Transverse colon (tissue), 4 donors: ENCODE measurements at regions of chr9 and their contacts with region 1.

Region 1: DNA sequence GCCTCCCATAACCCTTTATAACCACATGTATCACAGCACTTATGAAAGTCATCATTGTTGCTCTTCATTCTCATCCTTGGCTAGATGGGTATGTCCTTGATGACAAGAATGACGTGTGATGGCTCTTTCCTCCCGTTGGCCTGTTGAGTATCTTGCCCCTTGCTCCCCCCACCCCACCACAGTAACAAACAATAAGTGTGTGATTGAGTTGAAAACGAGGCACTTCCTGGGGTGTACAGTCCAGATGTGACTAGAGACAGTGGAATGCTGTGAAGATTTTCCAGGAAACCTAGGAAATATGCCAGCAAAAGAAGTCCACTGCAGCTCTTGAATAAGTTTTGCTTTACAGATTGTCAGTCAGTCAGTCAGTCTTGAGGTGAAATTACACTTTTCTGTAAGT is 262.5 kb downstream of the ELAVL2 start:
- DNase-seq: no peak
- H3K4me3 ChIP-seq: no peak overlapping the region
- H3K27ac ChIP-seq: no peak overlapping the region
- H3K4me1 ChIP-seq: no peaks in the 10 kb centered on the region
- H3K27me3 ChIP-seq: no peaks in the 10 kb centered on the region
- CTCF ChIP-seq: no peak
- EP300 ChIP-seq: no peak
- POLR2A ChIP-seq: no peak

Region 2: GRCh38 chr9:23307731-23308513 is 255.6 kb before region 1 on chr9:
- in situ Hi-C with region 1: no loop called
- intact Hi-C with region 1: loop called (anchors 10 kb)
- DNase-seq: no peak
- H3K4me3 ChIP-seq: no peak overlapping the region
- H3K27ac ChIP-seq: no peak overlapping the region
- H3K4me1 ChIP-seq: no peaks in the 10 kb centered on the region
- H3K27me3 ChIP-seq: no peaks in the 10 kb centered on the region
- CTCF ChIP-seq: no peak
- EP300 ChIP-seq: no peak
- POLR2A ChIP-seq: no peak

Region 3: DNA sequence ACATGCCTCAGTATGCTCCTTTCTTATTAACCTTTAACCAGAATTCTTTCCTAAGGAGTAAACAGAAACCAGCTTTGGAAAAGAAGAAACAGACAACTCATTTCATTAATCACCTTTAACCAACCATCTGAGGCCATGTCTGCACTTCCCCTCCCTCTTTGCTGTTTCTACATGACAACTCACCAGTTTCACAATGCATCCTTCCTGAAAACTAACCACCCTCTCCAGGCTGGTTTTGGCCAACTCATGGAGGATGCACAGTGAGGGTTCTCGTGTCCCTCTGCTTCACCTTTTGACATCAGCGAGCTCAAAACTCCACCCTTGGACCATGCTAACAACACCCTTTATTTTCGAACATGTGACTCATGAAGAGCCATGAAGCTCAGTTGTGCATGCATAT is 18.4 kb after region 1 on chr9:
- in situ Hi-C with region 1: no loop called
- intact Hi-C with region 1: no loop called
- DNase-seq: no peak
- H3K4me3 ChIP-seq: no peak overlapping the region
- H3K27ac ChIP-seq: no peak overlapping the region
- H3K4me1 ChIP-seq: no peaks in the 10 kb centered on the region
- H3K27me3 ChIP-seq: no peaks in the 10 kb centered on the region
- CTCF ChIP-seq: no peak
- EP300 ChIP-seq: no peak
- POLR2A ChIP-seq: no peak

Region 4: GRCh38 chr9:23635276-23635675 is 71.8 kb after region 1 on chr9:
- in situ Hi-C with region 1: no loop called
- intact Hi-C with region 1: no loop called
- DNase-seq: no peak
- H3K4me3 ChIP-seq: no peak overlapping the region
- H3K27ac ChIP-seq: no peak overlapping the region
- H3K4me1 ChIP-seq: no peaks in the 10 kb centered on the region
- H3K27me3 ChIP-seq: no peaks in the 10 kb centered on the region
- CTCF ChIP-seq: no peak
- EP300 ChIP-seq: no peak
- POLR2A ChIP-seq: no peak